ENCODE measurements at regions of chr6 and their contacts with region 1.

Region 1: GRCh38 chr6:33711140-33712129 is at the start of gene UQCC2:
- DNase-seq: peak; percentile 93 to 99 (median 97)
- ATAC-seq: peak; percentile 97
- H3K4me3 ChIP-seq: peak within 1 kb of the TSS; percentile 72
- H3K4me3 Mint-ChIP-seq: peak within 1 kb of the TSS; percentile 100
- H3K27ac ChIP-seq: peak within 1 kb of the TSS; percentile 84 to 90
- H3K27ac Mint-ChIP-seq: peak within 1 kb of the TSS; percentile 97
- H3K4me1 ChIP-seq: peaks cover 27% of the 10 kb centered on the region
- H3K4me1 Mint-ChIP-seq: peaks cover 31% of the 10 kb centered on the region
- H3K27me3 ChIP-seq: no peaks in the 10 kb centered on the region
- H3K27me3 Mint-ChIP-seq: no peaks in the 10 kb centered on the region
- CTCF ChIP-seq: peak; percentile 80
- total RNA-seq, gene UQCC2: 8.7 to 9.3 TPM

Region 2: GRCh38 chr6:33694401-33694931 is 17.0 kb before region 1 on chr6:
- CTCF ChIA-PET with region 1: interaction called, 9 read pairs
- POLR2A ChIA-PET with region 1: interaction called, 14 read pairs
- intact Hi-C with region 1: loop called in 1 of 2 experiments (anchors 1 kb)
- DNase-seq: peak; percentile 40 to 82 (median 66)
- ATAC-seq: peak; percentile 68
- H3K4me3 ChIP-seq: no peak overlapping the region
- H3K4me3 Mint-ChIP-seq: peak overlapping the region; percentile 81
- H3K27ac ChIP-seq: peak overlapping the region; percentile 77 to 88
- H3K27ac Mint-ChIP-seq: peak overlapping the region; percentile 97
- H3K4me1 ChIP-seq: peaks cover 79% of the 10 kb centered on the region
- H3K4me1 Mint-ChIP-seq: peaks cover 81% of the 10 kb centered on the region
- H3K27me3 ChIP-seq: no peaks in the 10 kb centered on the region
- H3K27me3 Mint-ChIP-seq: no peaks in the 10 kb centered on the region
- CTCF ChIP-seq: no peak

Region 3: GRCh38 chr6:33700391-33701050 is 10.9 kb before region 1 on chr6:
- CTCF ChIA-PET with region 1: interaction called, 38 read pairs
- POLR2A ChIA-PET with region 1: interaction called, 15 read pairs
- intact Hi-C with region 1: loop called in 1 of 2 experiments (anchors 1 kb)
- DNase-seq: peak; percentile 60 to 88 (median 72)
- ATAC-seq: peak; percentile 58
- H3K4me3 ChIP-seq: no peak overlapping the region
- H3K4me3 Mint-ChIP-seq: no peak overlapping the region
- H3K27ac ChIP-seq: no peak overlapping the region
- H3K27ac Mint-ChIP-seq: peak overlapping the region; percentile 84
- H3K4me1 ChIP-seq: peaks cover 42% of the 10 kb centered on the region
- H3K4me1 Mint-ChIP-seq: peaks cover 50% of the 10 kb centered on the region
- H3K27me3 ChIP-seq: no peaks in the 10 kb centered on the region
- H3K27me3 Mint-ChIP-seq: no peaks in the 10 kb centered on the region
- CTCF ChIP-seq: peak; percentile 73

Region 4: DNA sequence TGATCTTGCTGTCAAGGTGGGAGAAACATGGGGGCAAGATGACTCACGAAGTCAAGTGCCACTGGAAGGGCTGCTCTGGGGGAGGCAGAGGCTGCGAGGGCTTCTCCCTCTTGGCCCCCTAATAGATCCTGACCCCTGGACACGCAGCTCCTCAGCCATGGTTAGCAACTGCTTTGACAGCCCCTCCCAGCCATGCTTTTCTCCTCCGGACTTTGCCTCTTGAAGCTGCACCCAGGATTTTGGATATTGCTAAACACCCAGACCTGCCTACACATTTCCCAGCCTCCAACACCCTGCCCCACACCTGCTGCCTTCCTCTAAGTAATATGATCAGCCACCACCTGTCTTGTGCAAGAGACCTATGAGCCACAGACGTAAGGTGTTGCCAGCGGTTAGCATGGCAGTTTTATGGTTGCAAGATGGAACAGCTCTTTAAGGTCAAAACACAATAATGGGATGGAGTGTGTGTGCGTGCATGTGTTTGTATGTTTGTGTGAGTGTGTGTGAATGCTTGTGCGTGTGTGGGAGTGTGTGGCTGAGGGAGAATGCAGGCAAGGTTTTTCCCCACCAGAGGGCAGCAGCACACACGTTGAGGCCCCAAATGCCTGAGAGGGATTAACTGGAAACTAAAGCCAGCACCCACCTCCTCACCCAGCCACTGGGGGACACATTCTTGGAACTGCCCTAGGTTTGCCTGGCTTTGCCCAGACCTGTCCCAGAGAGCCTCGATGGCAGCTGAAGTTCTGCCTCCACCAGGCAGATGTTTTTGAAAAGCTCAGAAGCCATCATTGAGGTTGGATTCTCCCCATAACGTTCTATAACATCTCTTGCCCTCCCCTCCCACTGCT is 32.8 kb after region 1 on chr6:
- CTCF ChIA-PET with region 1: interaction called, 26 read pairs
- POLR2A ChIA-PET with region 1: interaction called, 6 read pairs
- intact Hi-C with region 1: loop called (anchors 1 kb)
- DNase-seq: peak; percentile 51 to 85 (median 65)
- ATAC-seq: peak; percentile 94
- H3K4me3 ChIP-seq: no peak overlapping the region
- H3K4me3 Mint-ChIP-seq: no peak overlapping the region
- H3K27ac ChIP-seq: no peak overlapping the region
- H3K27ac Mint-ChIP-seq: no peak overlapping the region
- H3K4me1 ChIP-seq: peaks cover 5% of the 10 kb centered on the region
- H3K4me1 Mint-ChIP-seq: peaks cover 5% of the 10 kb centered on the region
- H3K27me3 ChIP-seq: peaks cover 4% of the 10 kb centered on the region in 2 experiments
- H3K27me3 Mint-ChIP-seq: peaks cover 12% of the 10 kb centered on the region
- CTCF ChIP-seq: peak; percentile 86

Region 5: DNA sequence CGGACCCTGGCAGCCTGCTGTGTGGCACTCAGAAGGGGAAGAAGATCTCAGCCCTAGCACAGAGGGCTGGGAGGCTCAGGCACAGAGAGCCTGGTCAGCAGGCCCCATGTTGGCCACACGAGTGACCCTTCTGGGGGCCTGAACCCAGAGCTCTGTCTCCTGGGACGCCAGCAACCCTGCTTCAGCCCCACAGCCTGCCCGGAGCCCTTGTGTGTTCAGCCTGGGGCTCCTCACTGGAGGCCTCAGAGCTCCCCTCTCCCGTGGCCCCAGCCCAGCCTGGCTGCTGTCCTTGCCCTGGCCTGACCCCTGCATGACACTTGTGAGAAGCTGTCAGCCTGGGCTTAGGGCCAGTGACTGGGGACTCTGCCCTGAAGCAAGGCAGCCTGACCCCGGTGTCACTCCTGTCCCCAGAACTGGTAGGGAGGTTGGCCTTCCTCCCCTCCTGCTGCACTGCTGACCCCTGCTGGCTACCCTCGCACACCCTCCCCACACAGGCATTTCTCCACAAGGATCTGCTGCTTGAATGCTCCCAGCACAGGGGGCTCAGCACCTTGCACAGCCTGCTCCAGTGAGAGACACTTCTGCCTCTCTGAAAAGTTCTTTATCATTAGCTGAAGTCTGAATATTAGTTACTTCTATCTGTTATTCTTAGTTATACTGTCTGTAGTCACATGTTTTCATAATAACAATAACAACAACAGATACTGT is 50.6 kb after region 1 on chr6:
- CTCF ChIA-PET with region 1: interaction called, 3 read pairs
- POLR2A ChIA-PET with region 1: no interaction called
- intact Hi-C with region 1: loop called in 1 of 2 experiments (anchors 1 kb)
- DNase-seq: peak in 11 of 14 experiments; percentile 9 to 59 (median 36)
- ATAC-seq: no peak
- H3K4me3 ChIP-seq: no peak overlapping the region
- H3K4me3 Mint-ChIP-seq: no peak overlapping the region
- H3K27ac ChIP-seq: no peak overlapping the region
- H3K27ac Mint-ChIP-seq: no peak overlapping the region
- H3K4me1 ChIP-seq: no peaks in the 10 kb centered on the region
- H3K4me1 Mint-ChIP-seq: no peaks in the 10 kb centered on the region
- H3K27me3 ChIP-seq: no peaks in the 10 kb centered on the region
- H3K27me3 Mint-ChIP-seq: no peaks in the 10 kb centered on the region
- CTCF ChIP-seq: peak; percentile 23

Region 6: GRCh38 chr6:34027445-34027936 is 316.1 kb after region 1 on chr6:
- CTCF ChIA-PET with region 1: interaction called, 4 read pairs
- POLR2A ChIA-PET with region 1: no interaction called
- intact Hi-C with region 1: loop called (anchors 1 to 2 kb)
- DNase-seq: peak; percentile 46 to 77 (median 62)
- ATAC-seq: peak; percentile 76
- H3K4me3 ChIP-seq: no peak overlapping the region
- H3K4me3 Mint-ChIP-seq: no peak overlapping the region
- H3K27ac ChIP-seq: no peak overlapping the region
- H3K27ac Mint-ChIP-seq: no peak overlapping the region
- H3K4me1 ChIP-seq: peaks cover 4% of the 10 kb centered on the region
- H3K4me1 Mint-ChIP-seq: no peaks in the 10 kb centered on the region
- H3K27me3 ChIP-seq: no peaks in the 10 kb centered on the region
- H3K27me3 Mint-ChIP-seq: no peaks in the 10 kb centered on the region
- CTCF ChIP-seq: peak; percentile 84

Measured in CD4-positive, alpha-beta T cell (primary cell).